ENCODE measurements at regions of chr6 and their contacts with region 1.

Region 1: DNA sequence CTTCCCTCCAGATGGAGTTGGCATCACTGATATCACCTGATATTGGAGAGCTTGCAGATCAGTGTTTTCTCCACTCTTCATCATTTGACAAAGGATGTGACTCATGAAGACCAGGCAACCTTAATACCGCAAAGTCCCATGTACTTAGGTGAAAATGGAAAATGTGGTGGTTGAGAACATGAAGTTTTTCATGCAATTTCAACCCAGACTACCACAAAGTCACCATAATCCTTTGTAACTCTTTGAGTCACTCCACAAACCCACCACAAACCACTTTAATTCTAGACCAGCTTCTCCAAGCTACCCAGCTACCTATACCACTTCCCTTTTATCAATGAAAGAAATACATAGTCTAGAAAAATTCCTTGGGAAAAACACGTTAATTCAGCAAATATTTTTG is 7.1 kb downstream of the NHLRC1 start:
- DNase-seq: peak; percentile 20
- H3K4me3 Mint-ChIP-seq: no peak overlapping the region
- H3K27ac Mint-ChIP-seq: no peak overlapping the region
- H3K4me1 Mint-ChIP-seq: peaks cover 10% of the 10 kb centered on the region
- H3K27me3 Mint-ChIP-seq: peaks cover 34% of the 10 kb centered on the region

Region 2: DNA sequence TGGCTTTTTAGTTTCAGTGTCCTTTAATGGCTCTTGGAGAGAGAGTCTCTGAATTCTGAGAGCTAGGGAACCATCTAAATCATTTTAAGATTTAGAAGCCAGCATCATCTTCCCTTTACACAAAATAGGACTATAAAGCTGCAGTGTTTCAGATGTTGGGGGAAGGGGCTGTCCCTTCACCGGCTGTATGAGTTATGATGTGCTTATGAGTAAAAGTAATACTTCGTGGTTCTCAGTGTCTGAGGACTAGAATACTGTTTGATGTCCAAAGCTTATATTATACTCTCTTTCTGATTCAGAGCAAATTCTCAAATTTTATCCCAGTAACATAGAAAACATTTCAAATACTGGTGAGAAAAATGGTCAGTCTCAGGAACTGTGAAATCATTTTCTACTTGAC is 578.8 kb before region 1 on chr6:
- CTCF ChIA-PET with region 1: no interaction called
- intact Hi-C with region 1: loop called (anchors 1 kb)
- DNase-seq: peak; percentile 68
- H3K4me3 Mint-ChIP-seq: no peak overlapping the region
- H3K27ac Mint-ChIP-seq: no peak overlapping the region
- H3K4me1 Mint-ChIP-seq: peaks cover 5% of the 10 kb centered on the region
- H3K27me3 Mint-ChIP-seq: peaks cover 21% of the 10 kb centered on the region

Region 3: GRCh38 chr6:17987576-17988421 is 127.6 kb before region 1 on chr6 and contains the start of gene KIF13A:
- CTCF ChIA-PET with region 1: no interaction called
- intact Hi-C with region 1: loop called (anchors 5 kb)
- DNase-seq: peak; percentile 48
- H3K4me3 Mint-ChIP-seq: peak within 1 kb of the TSS; percentile 77
- H3K27ac Mint-ChIP-seq: no peak within 1 kb of the TSS
- H3K4me1 Mint-ChIP-seq: peaks cover 5% of the 10 kb centered on the region
- H3K27me3 Mint-ChIP-seq: peaks cover 64% of the 10 kb centered on the region
- total RNA-seq, gene KIF13A: not detected

Region 4: GRCh38 chr6:18488526-18489270 is 373.3 kb after region 1 on chr6:
- CTCF ChIA-PET with region 1: no interaction called
- intact Hi-C with region 1: loop called (anchors 10 kb)
- DNase-seq: no peak
- H3K4me3 Mint-ChIP-seq: no peak overlapping the region
- H3K27ac Mint-ChIP-seq: no peak overlapping the region
- H3K4me1 Mint-ChIP-seq: peaks cover 13% of the 10 kb centered on the region
- H3K27me3 Mint-ChIP-seq: peaks cover 14% of the 10 kb centered on the region